Common myeloid progenitor, CD34-positive (primary cell): ENCODE measurements at regions of chr7 and their contacts with region 1.

Region 1: DNA sequence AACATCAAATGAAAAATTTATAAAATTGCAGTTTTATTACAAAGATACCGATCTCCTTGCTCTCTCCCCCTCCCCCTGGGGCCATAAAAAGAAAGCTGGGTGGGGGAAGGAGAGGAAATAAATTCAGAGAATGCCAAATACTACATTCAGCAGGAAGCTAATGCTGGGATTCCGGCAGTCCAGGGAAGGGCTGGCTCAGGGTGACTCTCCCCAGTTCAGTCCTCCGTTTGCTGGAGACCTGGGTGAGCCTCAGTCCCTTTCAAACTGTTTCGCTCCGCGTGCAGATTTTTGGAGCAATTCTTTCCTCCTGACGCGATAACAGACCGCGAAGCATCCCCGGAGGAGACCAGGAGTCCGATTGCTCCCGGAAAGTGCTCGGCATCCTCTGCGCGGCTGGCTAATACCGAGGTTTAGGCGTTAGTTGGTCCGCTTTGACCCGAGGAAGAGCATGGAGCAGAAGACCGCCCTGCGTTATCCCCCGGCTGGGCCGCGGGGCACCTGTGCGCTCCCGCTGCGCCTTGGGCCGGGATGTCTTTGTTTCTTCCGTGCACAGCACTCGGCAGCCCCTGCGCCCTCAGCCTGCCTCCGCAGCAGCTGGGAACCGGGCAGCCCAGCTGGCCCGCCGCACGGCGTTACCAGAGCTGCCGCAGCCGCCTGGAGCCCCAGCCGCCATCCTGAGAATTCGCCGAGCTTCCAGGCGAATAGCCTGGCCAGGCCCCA is 3.9 kb upstream of the HOXA2 start:
- DNase-seq: no peak
- H3K4me3 ChIP-seq: no peak overlapping the region
- H3K27ac ChIP-seq: no peak overlapping the region
- H3K4me1 ChIP-seq: peaks cover 0 to 19% (median 12%) of the 10 kb centered on the region in 4 experiments
- H3K27me3 ChIP-seq: peaks cover 3 to 45% (median 22%) of the 10 kb centered on the region in 5 experiments

Region 2: GRCh38 chr7:27117887-27118491 is 11.6 kb after region 1 on chr7:
- CTCF ChIA-PET with region 1: interaction called, 10 read pairs
- POLR2A ChIA-PET with region 1: no interaction called
- DNase-seq: no peak
- H3K4me3 ChIP-seq: no peak overlapping the region
- H3K27ac ChIP-seq: no peak overlapping the region
- H3K4me1 ChIP-seq: peaks cover 0 to 2% (median 0%) of the 10 kb centered on the region in 4 experiments
- H3K27me3 ChIP-seq: no peaks in the 10 kb centered on the region